Left cardiac atrium (tissue), 4 donors: ENCODE measurements at regions of chr6 and their contacts with region 1.

Region 1: DNA sequence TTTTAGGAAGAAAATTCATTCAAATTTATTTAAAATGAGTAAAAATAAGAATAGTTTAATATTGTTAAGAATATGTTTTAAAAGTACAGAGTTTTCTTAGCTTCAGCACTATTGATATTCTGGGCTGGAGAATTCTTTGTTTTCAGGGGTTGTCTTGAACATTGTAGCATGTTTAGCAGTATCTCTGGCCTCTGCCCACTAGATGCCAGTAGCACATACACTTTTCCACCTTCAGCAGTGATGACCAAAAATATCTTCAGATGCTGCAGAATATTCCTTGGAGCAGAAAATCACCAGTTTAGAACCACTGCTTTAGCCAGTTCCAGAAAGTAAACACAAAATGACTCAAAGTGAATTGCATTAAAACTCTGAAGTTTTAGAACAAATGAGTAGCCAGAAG is 19.4 kb upstream of the SDHAF4 start:
- DNase-seq: no peak
- ATAC-seq: peak; percentile 67 to 82

Region 2: DNA sequence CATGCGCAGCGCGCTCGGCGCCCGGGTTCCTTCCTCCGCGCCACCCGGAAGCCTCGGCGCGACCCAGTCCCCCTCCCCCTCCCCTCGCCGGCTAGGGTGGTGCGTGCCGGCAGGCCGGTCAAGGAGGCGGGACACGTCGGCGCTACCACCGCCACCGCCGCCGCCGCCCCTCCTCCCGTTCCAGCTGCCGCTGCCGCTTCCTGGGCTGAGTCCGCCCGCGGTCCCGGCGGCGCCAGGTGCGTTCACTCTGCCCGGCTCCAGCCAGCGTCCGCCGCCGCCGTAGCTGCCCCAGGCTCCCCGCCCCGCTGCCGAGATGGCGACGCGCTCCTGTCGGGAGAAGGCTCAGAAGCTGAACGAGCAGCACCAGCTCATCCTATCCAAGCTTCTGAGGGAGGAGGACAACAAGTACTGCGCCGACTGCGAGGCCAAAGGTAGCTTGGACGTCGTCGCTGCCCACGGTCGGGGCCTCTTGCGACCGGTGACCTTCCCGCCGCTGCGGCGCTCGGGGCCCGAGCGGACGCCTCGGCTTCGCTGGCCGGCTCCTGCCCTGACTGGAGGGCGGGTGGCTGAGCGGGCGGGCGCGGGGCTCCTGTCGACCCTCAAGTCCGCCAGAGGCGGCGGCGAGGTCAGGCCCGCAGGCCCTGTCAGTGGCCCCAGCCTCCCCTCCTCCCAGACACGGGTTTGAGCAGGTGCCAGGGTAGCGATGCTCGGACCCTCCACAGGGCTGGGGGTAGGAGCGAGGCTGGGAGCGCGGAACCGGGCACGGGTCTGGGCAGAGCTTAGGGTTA is 120.6 kb after region 1 on chr6 and contains the start of gene SMAP1:
- intact Hi-C with region 1: loop called in 1 of 2 experiments (anchors 5 kb)
- DNase-seq: peak; percentile 96
- ATAC-seq: peak; percentile 99
- total RNA-seq, gene SMAP1: 24.4 to 27.8 TPM

Region 3: GRCh38 chr6:70686548-70687133 is 139.3 kb after region 1 on chr6:
- intact Hi-C with region 1: loop called in 1 of 2 experiments (anchors 2 kb)
- DNase-seq: no peak
- ATAC-seq: peak in 1 of 2 donors; percentile 49

Region 4: GRCh38 chr6:70884074-70884983 is 337.0 kb after region 1 on chr6:
- intact Hi-C with region 1: loop called in 1 of 2 experiments (anchors 2 kb)
- DNase-seq: peak; percentile 53
- ATAC-seq: peak; percentile 85 to 87

Region 5: DNA sequence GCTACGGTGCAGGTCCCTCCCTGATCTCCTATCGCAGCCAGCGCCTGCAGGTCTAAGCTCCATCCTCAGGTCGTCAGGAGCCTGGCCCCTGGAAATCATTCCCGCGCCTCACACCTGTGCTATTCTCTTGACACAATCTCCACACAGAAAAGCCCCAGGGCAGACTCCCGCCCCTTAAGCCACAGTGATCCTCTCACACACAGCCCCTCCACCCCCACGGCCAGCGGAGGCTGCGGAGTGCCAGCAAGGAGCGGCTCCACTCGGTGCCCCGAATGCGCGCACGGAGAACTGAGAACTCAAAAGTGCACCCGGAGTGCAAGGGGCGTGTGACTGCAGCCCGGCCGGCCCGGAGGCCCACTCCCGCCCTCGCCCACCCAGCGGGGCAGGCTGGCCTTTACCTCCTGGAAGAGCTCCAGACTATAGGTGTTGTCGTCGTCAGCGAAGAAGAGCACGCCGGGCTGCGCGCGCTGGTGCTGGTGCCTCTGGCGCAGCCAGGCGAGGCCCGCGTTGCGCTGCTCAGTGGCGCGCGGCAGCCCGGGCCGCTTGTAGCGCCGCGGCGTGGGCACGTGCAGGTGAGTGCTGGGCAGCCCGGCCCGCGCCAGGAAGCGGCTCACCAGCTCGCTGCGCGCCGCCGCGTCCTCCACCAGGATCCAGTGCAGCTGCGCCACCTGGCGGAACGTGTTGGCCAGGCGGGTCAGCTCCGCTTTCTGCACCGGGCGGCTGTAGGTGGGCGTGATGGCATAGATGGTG is 408.3 kb after region 1 on chr6:
- intact Hi-C with region 1: loop called in 1 of 2 experiments (anchors 5 kb)
- DNase-seq: peak; percentile 87
- ATAC-seq: peak; percentile 95 to 96